ENCODE measurements at regions of chr3 and their contacts with region 1.

Region 1: DNA sequence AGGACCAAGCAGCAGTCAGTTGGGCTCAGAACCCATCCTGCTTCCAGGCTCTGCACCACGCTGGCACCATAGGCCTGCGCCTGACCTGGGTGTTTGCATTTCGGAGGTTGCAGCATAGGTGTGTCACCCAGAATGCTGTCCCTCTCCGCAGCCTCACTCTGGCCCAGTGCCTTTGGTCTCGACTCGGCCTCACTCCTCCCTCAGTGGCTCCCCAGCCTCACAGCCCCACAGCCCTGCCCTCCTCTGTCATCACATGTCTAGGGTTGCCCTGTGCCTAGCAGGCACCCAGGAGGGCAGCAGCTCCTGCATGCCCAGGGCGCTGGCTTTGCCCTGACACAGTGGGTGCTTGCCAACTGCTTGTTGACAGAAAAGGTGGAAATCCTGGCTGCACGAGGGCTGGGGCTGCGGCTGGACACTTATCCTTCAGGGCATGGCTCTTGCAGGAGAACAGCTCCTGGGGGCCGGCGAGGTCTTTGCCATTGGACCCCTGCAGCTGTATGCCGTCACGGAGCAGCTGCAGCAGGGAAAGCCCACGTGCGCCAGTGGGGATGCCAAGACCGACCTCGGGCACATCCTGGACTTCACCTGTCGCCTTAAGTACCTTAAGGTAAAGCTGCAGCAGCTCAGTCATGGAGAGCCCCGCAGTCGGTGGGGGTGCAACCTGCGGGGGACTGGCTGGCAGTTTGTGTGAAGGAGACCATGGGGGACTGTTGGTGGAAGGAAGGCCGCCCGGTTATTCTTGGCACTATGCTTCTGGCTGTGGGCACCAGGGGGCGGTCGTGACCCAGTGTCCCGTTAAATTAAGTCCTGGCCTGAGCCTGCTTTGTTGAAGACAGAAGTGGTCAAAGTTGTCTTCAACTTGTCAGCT is 16.2 kb downstream of the NISCH start:
- DNase-seq: peak; percentile 79 to 80
- ATAC-seq: peak; percentile 80 to 91 (median 86)
- H3K4me3 ChIP-seq: no peak overlapping the region
- H3K27ac ChIP-seq: peak overlapping the region in 2 of 10 donors; percentile 43 to 77
- H3K4me1 ChIP-seq: peaks cover 8 to 68% (median 34%) of the 10 kb centered on the region in 9 donors
- H3K27me3 ChIP-seq: no peaks in the 10 kb centered on the region
- CTCF ChIP-seq: peak; percentile 48 to 85 (median 78)

Region 2: GRCh38 chr3:52536369-52537164 is 65.0 kb after region 1 on chr3 and contains the start of gene UQCC5:
- intact Hi-C with region 1: loop called in 7 of 10 experiments (anchors 2 to 5 kb)
- DNase-seq: peak; percentile 96 to 98
- ATAC-seq: peak; percentile 90 to 96 (median 95)
- H3K4me3 ChIP-seq: peak within 1 kb of the TSS; percentile 46 to 93 (median 71)
- H3K27ac ChIP-seq: peak within 1 kb of the TSS; percentile 82 to 96 (median 92)
- H3K4me1 ChIP-seq: peaks cover 24 to 88% (median 61%) of the 10 kb centered on the region in 9 donors
- H3K27me3 ChIP-seq: no peaks in the 10 kb centered on the region
- CTCF ChIP-seq: peak in 1 of 9 donors; percentile 25
- total RNA-seq, gene UQCC5: 30.2 to 98.0 (median 66.9) TPM

Region 3: GRCh38 chr3:52670621-52671521 is 199.3 kb after region 1 on chr3:
- intact Hi-C with region 1: loop called in 1 of 10 experiments (anchors 10 kb)
- DNase-seq: no peak
- ATAC-seq: peak in 6 of 8 donors; percentile 81 to 99 (median 89)
- H3K4me3 ChIP-seq: no peak overlapping the region
- H3K27ac ChIP-seq: peak overlapping the region in 6 of 10 donors; percentile 6 to 54 (median 34)
- H3K4me1 ChIP-seq: peaks cover 0 to 39% (median 12%) of the 10 kb centered on the region in 9 donors
- H3K27me3 ChIP-seq: no peaks in the 10 kb centered on the region
- CTCF ChIP-seq: no peak

Region 4: DNA sequence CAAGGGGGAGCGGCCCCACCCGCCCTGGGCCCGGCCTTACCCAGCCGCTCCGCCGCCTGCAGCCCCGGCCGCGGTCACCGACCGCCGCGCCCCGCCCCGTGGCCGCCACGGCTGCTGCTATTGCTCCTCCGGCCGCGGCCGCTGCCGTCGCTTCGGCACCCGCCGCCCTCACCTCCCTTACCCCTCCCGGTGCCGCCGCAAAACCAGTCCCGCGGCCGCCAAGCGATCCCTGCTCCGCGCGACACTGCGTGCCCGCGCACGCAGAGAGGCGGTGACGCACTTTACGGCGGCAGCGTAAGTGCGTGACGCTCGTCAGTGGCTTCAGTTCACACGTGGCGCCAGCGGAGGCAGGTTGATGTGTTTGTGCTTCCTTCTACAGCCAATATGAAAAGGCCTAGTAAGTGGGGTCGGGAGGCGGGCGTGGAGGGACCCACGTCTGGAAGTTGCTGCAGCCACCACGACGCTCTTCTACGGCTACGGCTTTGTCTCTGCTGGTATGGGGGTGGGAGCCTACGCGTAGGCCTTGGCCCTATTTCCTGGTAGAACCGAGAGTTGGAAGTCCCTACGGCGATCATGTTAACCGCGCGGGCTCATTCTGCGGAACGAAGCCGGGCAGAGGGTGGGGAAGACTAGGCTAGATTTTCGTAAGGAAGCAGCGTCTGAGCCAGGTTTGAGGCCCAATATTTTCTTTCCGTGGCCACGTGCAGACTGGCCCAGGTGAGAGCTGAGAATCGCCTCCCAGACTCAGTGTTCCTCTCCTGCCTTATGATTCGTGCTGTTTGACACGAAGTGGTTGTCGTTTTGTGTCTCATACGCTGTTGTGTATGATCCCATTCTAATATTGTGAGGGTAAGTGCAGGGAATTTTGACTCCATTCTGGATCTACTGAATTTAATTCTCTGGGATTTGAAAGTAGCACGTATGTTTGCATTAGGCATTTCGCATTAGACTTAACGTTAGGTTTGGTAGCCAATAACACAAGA is 214.4 kb after region 1 on chr3 and contains the starts of genes GNL3 and PBRM1:
- intact Hi-C with region 1: loop called in 3 of 10 experiments (anchors 10 kb)
- DNase-seq: peak; percentile 92 to 93
- ATAC-seq: peak; percentile 87 to 97 (median 92)
- H3K4me3 ChIP-seq: peak within 1 kb of the TSS; percentile 50 to 95 (median 76)
- H3K27ac ChIP-seq: peak within 1 kb of the TSS; percentile 91 to 99 (median 98)
- H3K4me1 ChIP-seq: peaks cover 0 to 55% (median 52%) of the 10 kb centered on the region in 9 donors
- H3K27me3 ChIP-seq: no peaks in the 10 kb centered on the region
- CTCF ChIP-seq: peak in 1 of 9 donors; percentile 10
- total RNA-seq, gene GNL3: 20.6 to 45.1 (median 25.7) TPM
- total RNA-seq, gene PBRM1: 41.6 to 63.9 (median 51.7) TPM